ENCODE measurements at regions of chr17 and their contacts with region 1.

Region 1: GRCh38 chr17:38322091-38322779 is 21.5 kb downstream of the GPR179 start:
- DNase-seq: peak; percentile 82
- H3K4me3 Mint-ChIP-seq: no peak overlapping the region
- H3K27ac Mint-ChIP-seq: no peak overlapping the region
- H3K4me1 Mint-ChIP-seq: peaks cover 7% of the 10 kb centered on the region
- H3K27me3 Mint-ChIP-seq: no peaks in the 10 kb centered on the region

Region 2: GRCh38 chr17:38333635-38334295 is 11.5 kb after region 1 on chr17:
- CTCF ChIA-PET with region 1: interaction called, 19 read pairs
- intact Hi-C with region 1: no loop called
- DNase-seq: peak; percentile 73
- H3K4me3 Mint-ChIP-seq: no peak overlapping the region
- H3K27ac Mint-ChIP-seq: no peak overlapping the region
- H3K4me1 Mint-ChIP-seq: no peaks in the 10 kb centered on the region
- H3K27me3 Mint-ChIP-seq: peaks cover 3% of the 10 kb centered on the region

Region 3: GRCh38 chr17:38415250-38416194 is 93.3 kb after region 1 on chr17:
- CTCF ChIA-PET with region 1: interaction called, 4 read pairs
- intact Hi-C with region 1: loop called (anchors 2 kb)
- DNase-seq: peak; percentile 64
- H3K4me3 Mint-ChIP-seq: peak overlapping the region; percentile 76
- H3K27ac Mint-ChIP-seq: peak overlapping the region; percentile 78
- H3K4me1 Mint-ChIP-seq: peaks cover 16% of the 10 kb centered on the region
- H3K27me3 Mint-ChIP-seq: peaks cover 29% of the 10 kb centered on the region

Region 4: GRCh38 chr17:38498186-38498752 is 176.0 kb after region 1 on chr17:
- CTCF ChIA-PET with region 1: no interaction called
- intact Hi-C with region 1: no loop called
- DNase-seq: no peak
- H3K4me3 Mint-ChIP-seq: no peak overlapping the region
- H3K27ac Mint-ChIP-seq: no peak overlapping the region
- H3K4me1 Mint-ChIP-seq: no peaks in the 10 kb centered on the region
- H3K27me3 Mint-ChIP-seq: no peaks in the 10 kb centered on the region